HepG2 (cell line): ENCODE measurements at regions of chr1 and their contacts with region 1.

Region 1: GRCh38 chr1:156383023-156383422 is 14.0 kb downstream of the RHBG start:
- DNase-seq: peak; percentile 49
- ATAC-seq: peak; percentile 71
- H3K4me3 ChIP-seq: no peak overlapping the region
- H3K27ac ChIP-seq: no peak overlapping the region
- H3K4me1 ChIP-seq: peaks cover 32% of the 10 kb centered on the region
- H3K27me3 ChIP-seq: no peaks in the 10 kb centered on the region
- CTCF ChIP-seq: peak; percentile 87
- EP300 ChIP-seq: no peak
- POLR2A ChIP-seq: peak in 1 of 2 experiments; percentile 35; a peak in 1 of 4 replicates
- RAD21 ChIP-seq: peak; percentile 75

Region 2: DNA sequence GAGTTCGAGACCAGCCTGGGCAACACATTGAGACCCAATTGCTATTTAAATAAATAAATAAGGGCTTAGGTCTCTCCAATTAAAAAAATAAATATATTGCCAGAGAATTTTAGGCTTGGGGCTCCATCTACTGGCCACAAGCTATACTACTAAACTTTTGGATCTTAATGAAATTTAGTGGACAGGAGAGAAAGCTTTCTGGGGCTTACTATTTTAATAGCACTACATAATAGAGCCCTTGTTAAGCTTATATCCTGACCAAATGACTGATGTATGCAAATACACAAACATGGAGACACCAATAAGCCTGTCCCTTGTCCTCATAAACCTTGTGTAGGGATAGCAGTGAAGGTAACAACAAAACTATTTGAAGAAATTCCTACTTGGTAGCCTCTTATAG is 63.4 kb before region 1 on chr1:
- CTCF ChIA-PET with region 1: no interaction called
- POLR2A ChIA-PET with region 1: no interaction called
- in situ Hi-C with region 1: no loop called
- intact Hi-C with region 1: no loop called
- DNase-seq: peak; percentile 25
- ATAC-seq: 0 out of 3 replicates have a peak, but pooled peaks have one; percentile 30
- H3K4me3 ChIP-seq: no peak overlapping the region
- H3K27ac ChIP-seq: no peak overlapping the region
- H3K4me1 ChIP-seq: no peaks in the 10 kb centered on the region
- H3K27me3 ChIP-seq: no peaks in the 10 kb centered on the region
- CTCF ChIP-seq: peak; percentile 40; the same call in 1 of the 2 replicates
- EP300 ChIP-seq: no peak
- POLR2A ChIP-seq: no peak
- RAD21 ChIP-seq: no peak

Region 3: DNA sequence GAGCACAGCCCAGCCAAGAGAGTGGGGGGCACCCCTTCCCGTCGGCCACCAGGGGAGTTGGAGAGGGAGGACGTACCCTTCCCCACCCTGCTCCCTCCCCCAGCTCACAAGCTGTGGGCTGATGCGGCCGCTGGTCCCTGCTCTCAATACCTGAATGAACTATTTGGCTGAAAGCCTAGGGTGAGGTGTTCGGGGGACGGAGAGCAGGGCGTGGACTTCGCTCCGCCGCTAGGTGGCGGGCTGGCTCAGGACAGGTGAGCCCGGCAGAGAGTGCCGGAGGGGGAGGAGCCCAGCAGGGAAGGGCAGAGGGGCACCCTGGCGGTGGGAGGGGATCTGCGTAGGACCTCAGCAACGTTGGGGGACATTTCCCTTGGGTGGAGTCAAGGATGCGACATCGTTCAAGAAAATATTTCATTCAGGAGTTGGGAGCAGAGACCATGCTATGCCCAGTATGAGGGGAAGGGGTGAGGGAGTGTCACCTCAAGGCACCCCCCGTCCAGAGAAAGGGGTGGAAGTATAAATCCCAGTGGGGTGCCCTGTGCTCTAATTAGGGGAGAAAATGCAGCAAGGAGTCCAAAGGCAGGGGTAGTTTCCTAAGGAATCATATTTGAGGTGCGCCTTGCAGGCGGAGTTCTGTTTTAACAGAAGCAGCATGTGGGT is 26.0 kb before region 1 on chr1:
- CTCF ChIA-PET with region 1: interaction called, 9 read pairs
- POLR2A ChIA-PET with region 1: interaction called, 6 read pairs
- in situ Hi-C with region 1: no loop called
- intact Hi-C with region 1: loop called (anchors 1 kb)
- DNase-seq: peak; percentile 73
- ATAC-seq: peak; percentile 98
- H3K4me3 ChIP-seq: peak overlapping the region in 2 of 3 experiments; percentile 13 to 47; a peak in 2 of 6 replicates
- H3K27ac ChIP-seq: no peak overlapping the region
- H3K4me1 ChIP-seq: peaks cover 44% of the 10 kb centered on the region
- H3K27me3 ChIP-seq: no peaks in the 10 kb centered on the region
- CTCF ChIP-seq: peak; percentile 100
- EP300 ChIP-seq: no peak
- POLR2A ChIP-seq: no peak
- RAD21 ChIP-seq: peak; percentile 93

Region 4: DNA sequence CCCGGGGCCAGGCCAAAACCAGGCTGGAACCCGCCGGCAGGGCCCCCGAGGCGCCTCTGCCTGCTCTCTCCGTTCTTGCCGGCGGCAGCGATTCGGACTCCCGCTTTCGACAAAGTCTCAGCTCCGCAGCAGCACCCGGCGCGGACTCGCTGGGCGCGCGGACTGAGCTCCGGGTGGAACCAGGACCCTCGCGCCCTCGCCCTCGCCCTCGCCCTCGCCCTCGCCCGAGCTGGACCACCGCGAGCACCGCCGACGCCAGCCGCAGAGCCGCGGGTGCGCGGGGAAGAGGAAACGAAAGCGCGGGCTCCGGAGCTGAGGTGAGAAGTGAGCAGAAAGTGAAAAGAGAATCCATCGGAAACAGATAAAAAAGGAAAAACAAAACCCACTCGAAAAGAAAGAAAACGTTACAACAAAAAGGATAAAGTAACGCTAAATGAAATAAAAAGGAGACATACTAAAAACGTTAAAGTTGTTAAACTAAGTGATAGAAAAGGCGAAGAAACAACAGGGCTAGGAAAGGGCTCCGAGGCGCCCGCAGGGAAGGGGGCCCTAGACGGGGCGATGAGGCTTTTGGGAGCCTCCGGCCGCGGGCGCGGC is 52.6 kb after region 1 on chr1:
- CTCF ChIA-PET with region 1: no interaction called
- POLR2A ChIA-PET with region 1: no interaction called
- in situ Hi-C with region 1: loop called (anchors 5 kb)
- intact Hi-C with region 1: no loop called
- DNase-seq: no peak
- ATAC-seq: peak; percentile 25
- H3K4me3 ChIP-seq: peak overlapping the region in 1 of 3 experiments; percentile 51; a peak in 2 of 6 replicates
- H3K27ac ChIP-seq: no peak overlapping the region
- H3K4me1 ChIP-seq: no peaks in the 10 kb centered on the region; the same call in 1 of the 2 replicates
- H3K27me3 ChIP-seq: peaks cover 24 to 94% of the 10 kb centered on the region in 2 experiments
- CTCF ChIP-seq: no peak
- EP300 ChIP-seq: no peak
- POLR2A ChIP-seq: no peak
- RAD21 ChIP-seq: no peak

Region 5: GRCh38 chr1:156445789-156446263 is 62.8 kb after region 1 on chr1:
- CTCF ChIA-PET with region 1: interaction called, 76 read pairs
- POLR2A ChIA-PET with region 1: interaction called, 21 read pairs
- in situ Hi-C with region 1: no loop called
- intact Hi-C with region 1: loop called (anchors 1 kb)
- DNase-seq: peak; percentile 83
- ATAC-seq: peak; percentile 98
- H3K4me3 ChIP-seq: peak overlapping the region in 1 of 3 experiments; percentile 30; a peak in 1 of 6 replicates
- H3K27ac ChIP-seq: no peak overlapping the region
- H3K4me1 ChIP-seq: no peaks in the 10 kb centered on the region
- H3K27me3 ChIP-seq: peaks cover 0 to 30% of the 10 kb centered on the region in 2 experiments; a peak in 3 of 5 replicates
- CTCF ChIP-seq: peak; percentile 96
- EP300 ChIP-seq: no peak
- POLR2A ChIP-seq: no peak
- RAD21 ChIP-seq: peak; percentile 93

Region 6: GRCh38 chr1:156456622-156457465 is 73.8 kb after region 1 on chr1:
- CTCF ChIA-PET with region 1: no interaction called
- POLR2A ChIA-PET with region 1: interaction called, 12 read pairs
- in situ Hi-C with region 1: no loop called
- intact Hi-C with region 1: no loop called
- DNase-seq: peak; percentile 96
- ATAC-seq: peak; percentile 91
- H3K4me3 ChIP-seq: peak overlapping the region; percentile 54 to 75 (median 55); a peak in 5 of 6 replicates
- H3K27ac ChIP-seq: peak overlapping the region; percentile 85
- H3K4me1 ChIP-seq: peaks cover 60% of the 10 kb centered on the region
- H3K27me3 ChIP-seq: no peaks in the 10 kb centered on the region
- CTCF ChIP-seq: no peak
- EP300 ChIP-seq: no peak; a peak in 1 of 4 replicates
- POLR2A ChIP-seq: peak; percentile 60 to 64
- RAD21 ChIP-seq: peak; percentile 3; the same call in 1 of the 2 replicates